ENCODE measurements at regions of chr11 and their contacts with region 1.

Region 1: GRCh38 chr11:16785520-16786128 is 47.2 kb downstream of the C11orf58 start:
- DNase-seq: peak in 1 of 2 experiments; percentile 76
- H3K4me3 ChIP-seq: no peak overlapping the region
- H3K27ac ChIP-seq: no peak overlapping the region
- H3K4me1 ChIP-seq: no peaks in the 10 kb centered on the region
- H3K27me3 ChIP-seq: no peaks in the 10 kb centered on the region
- CTCF ChIP-seq: peak; percentile 75 to 93 (median 88)
- EP300 ChIP-seq: no peak
- POLR2A ChIP-seq: no peak
- RAD21 ChIP-seq: peak; percentile 83 to 88

Region 2: GRCh38 chr11:16722581-16723344 is 62.9 kb before region 1 on chr11:
- CTCF ChIA-PET with region 1: no interaction called
- POLR2A ChIA-PET with region 1: no interaction called
- DNase-seq: no peak
- H3K4me3 ChIP-seq: no peak overlapping the region
- H3K27ac ChIP-seq: no peak overlapping the region
- H3K4me1 ChIP-seq: no peaks in the 10 kb centered on the region
- H3K27me3 ChIP-seq: no peaks in the 10 kb centered on the region
- CTCF ChIP-seq: no peak
- EP300 ChIP-seq: no peak
- POLR2A ChIP-seq: no peak
- RAD21 ChIP-seq: no peak

Region 3: DNA sequence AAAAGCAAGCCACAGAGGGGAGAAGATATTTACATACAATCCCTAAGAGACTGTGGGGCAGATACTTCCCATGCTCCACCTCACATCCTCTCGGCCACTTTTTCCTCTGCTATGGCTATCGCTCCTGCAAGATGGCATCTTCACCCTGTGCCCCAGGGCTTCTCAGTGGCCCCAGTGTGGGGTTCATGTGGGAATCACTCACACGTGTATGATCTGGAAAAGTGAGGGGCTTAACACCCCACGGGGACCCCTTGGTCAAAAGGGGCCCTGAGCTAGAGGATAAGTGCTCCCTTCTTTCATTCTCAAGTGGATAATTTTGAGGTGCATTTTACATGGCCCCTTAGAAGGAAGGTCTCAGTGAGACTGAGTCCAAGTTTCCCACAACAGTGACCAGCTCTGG is 18.5 kb before region 1 on chr11:
- CTCF ChIA-PET with region 1: interaction called, 15 read pairs
- POLR2A ChIA-PET with region 1: interaction called, 4 read pairs
- DNase-seq: no peak
- H3K4me3 ChIP-seq: no peak overlapping the region
- H3K27ac ChIP-seq: no peak overlapping the region
- H3K4me1 ChIP-seq: no peaks in the 10 kb centered on the region
- H3K27me3 ChIP-seq: peaks cover 0 to 2% (median 0%) of the 10 kb centered on the region in 4 experiments; a peak in 1 of 7 replicates
- CTCF ChIP-seq: no peak
- EP300 ChIP-seq: no peak
- POLR2A ChIP-seq: no peak
- RAD21 ChIP-seq: no peak

Region 4: GRCh38 chr11:16801288-16801980 is 15.8 kb after region 1 on chr11:
- CTCF ChIA-PET with region 1: interaction called, 28 read pairs
- POLR2A ChIA-PET with region 1: no interaction called
- DNase-seq: no peak
- H3K4me3 ChIP-seq: no peak overlapping the region
- H3K27ac ChIP-seq: no peak overlapping the region
- H3K4me1 ChIP-seq: no peaks in the 10 kb centered on the region
- H3K27me3 ChIP-seq: no peaks in the 10 kb centered on the region
- CTCF ChIP-seq: no peak
- EP300 ChIP-seq: no peak
- POLR2A ChIP-seq: no peak
- RAD21 ChIP-seq: no peak

Region 5: GRCh38 chr11:16881074-16881709 is 95.6 kb after region 1 on chr11:
- CTCF ChIA-PET with region 1: interaction called, 17 read pairs
- POLR2A ChIA-PET with region 1: no interaction called
- DNase-seq: no peak
- H3K4me3 ChIP-seq: no peak overlapping the region
- H3K27ac ChIP-seq: no peak overlapping the region
- H3K4me1 ChIP-seq: peaks cover 2 to 9% (median 6%) of the 10 kb centered on the region in 4 experiments; a peak in 4 of 7 replicates
- H3K27me3 ChIP-seq: no peaks in the 10 kb centered on the region
- CTCF ChIP-seq: peak; percentile 37 to 41 (median 40)
- EP300 ChIP-seq: no peak
- POLR2A ChIP-seq: no peak
- RAD21 ChIP-seq: peak; percentile 41 to 46; a peak in 3 of 4 replicates

Region 6: GRCh38 chr11:16945671-16946469 is 160.2 kb after region 1 on chr11:
- CTCF ChIA-PET with region 1: interaction called, 12 read pairs
- POLR2A ChIA-PET with region 1: no interaction called
- DNase-seq: peak in 1 of 2 experiments; percentile 69
- H3K4me3 ChIP-seq: no peak overlapping the region
- H3K27ac ChIP-seq: no peak overlapping the region
- H3K4me1 ChIP-seq: peaks cover 0 to 8% (median 4%) of the 10 kb centered on the region in 4 experiments; a peak in 4 of 7 replicates
- H3K27me3 ChIP-seq: no peaks in the 10 kb centered on the region
- CTCF ChIP-seq: peak; percentile 58 to 71 (median 64)
- EP300 ChIP-seq: no peak
- POLR2A ChIP-seq: no peak
- RAD21 ChIP-seq: peak; percentile 82 to 84